Endothelial cell of umbilical vein (primary cell): ENCODE measurements at regions of chr20 and their contacts with region 1.

Region 1: GRCh38 chr20:39264506-39265172 is 302.5 kb downstream of the DHX35 start:
- DNase-seq: peak; percentile 72
- H3K4me3 ChIP-seq: no peak overlapping the region
- H3K27ac ChIP-seq: no peak overlapping the region
- H3K4me1 ChIP-seq: peaks cover 4% of the 10 kb centered on the region
- H3K27me3 ChIP-seq: no peaks in the 10 kb centered on the region
- CTCF ChIP-seq: peak; percentile 87 to 93
- POLR2A ChIP-seq: no peak

Region 2: GRCh38 chr20:39112178-39112743 is 152.4 kb before region 1 on chr20:
- CTCF ChIA-PET with region 1: interaction called, 11 read pairs
- POLR2A ChIA-PET with region 1: no interaction called
- dilution Hi-C with region 1: no loop called
- intact Hi-C with region 1: loop called (anchors 1 kb)
- DNase-seq: peak; percentile 41
- H3K4me3 ChIP-seq: no peak overlapping the region
- H3K27ac ChIP-seq: no peak overlapping the region
- H3K4me1 ChIP-seq: peaks cover 22% of the 10 kb centered on the region
- H3K27me3 ChIP-seq: peaks cover 2 to 20% of the 10 kb centered on the region in 2 experiments
- CTCF ChIP-seq: peak; percentile 49 to 62
- POLR2A ChIP-seq: no peak

Region 3: DNA sequence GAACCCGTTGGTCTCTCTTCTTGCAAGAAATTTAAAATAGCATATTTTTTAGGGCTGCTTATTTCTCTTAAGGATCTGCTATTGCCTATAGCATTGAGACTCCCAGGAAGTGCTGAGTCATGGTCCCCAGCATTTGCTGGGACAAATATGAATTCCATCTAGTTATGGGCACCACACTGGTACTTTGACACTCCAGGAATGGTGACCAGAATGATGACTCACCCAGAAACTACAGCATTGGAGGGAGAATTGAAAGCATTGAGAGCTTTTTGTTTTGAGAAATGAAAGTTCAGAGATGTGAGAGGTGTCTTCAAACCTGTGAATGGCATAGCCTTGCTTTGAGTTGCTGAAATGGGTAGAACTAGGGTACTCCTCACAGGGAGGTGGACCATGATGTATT is 397.2 kb after region 1 on chr20:
- CTCF ChIA-PET with region 1: no interaction called
- POLR2A ChIA-PET with region 1: no interaction called
- dilution Hi-C with region 1: no loop called
- intact Hi-C with region 1: loop called (anchors 10 kb)
- DNase-seq: peak; percentile 7
- H3K4me3 ChIP-seq: no peak overlapping the region
- H3K27ac ChIP-seq: no peak overlapping the region
- H3K4me1 ChIP-seq: peaks cover 28% of the 10 kb centered on the region
- H3K27me3 ChIP-seq: no peaks in the 10 kb centered on the region
- CTCF ChIP-seq: no peak
- POLR2A ChIP-seq: no peak

Region 4: GRCh38 chr20:40160097-40160550 is 895.5 kb after region 1 on chr20:
- CTCF ChIA-PET with region 1: interaction called, 11 read pairs
- POLR2A ChIA-PET with region 1: no interaction called
- dilution Hi-C with region 1: no loop called
- intact Hi-C with region 1: no loop called
- DNase-seq: peak; percentile 75
- H3K4me3 ChIP-seq: no peak overlapping the region
- H3K27ac ChIP-seq: no peak overlapping the region
- H3K4me1 ChIP-seq: no peaks in the 10 kb centered on the region
- H3K27me3 ChIP-seq: no peaks in the 10 kb centered on the region
- CTCF ChIP-seq: peak; percentile 83 to 89
- POLR2A ChIP-seq: no peak

Region 5: GRCh38 chr20:40471261-40471629 is 1206.6 kb after region 1 on chr20:
- CTCF ChIA-PET with region 1: no interaction called
- POLR2A ChIA-PET with region 1: no interaction called
- dilution Hi-C with region 1: no loop called
- intact Hi-C with region 1: loop called (anchors 10 kb)
- DNase-seq: no peak
- H3K4me3 ChIP-seq: no peak overlapping the region
- H3K27ac ChIP-seq: no peak overlapping the region
- H3K4me1 ChIP-seq: no peaks in the 10 kb centered on the region
- H3K27me3 ChIP-seq: no peaks in the 10 kb centered on the region
- CTCF ChIP-seq: peak in 1 of 2 donors; percentile 14
- POLR2A ChIP-seq: no peak

Region 6: DNA sequence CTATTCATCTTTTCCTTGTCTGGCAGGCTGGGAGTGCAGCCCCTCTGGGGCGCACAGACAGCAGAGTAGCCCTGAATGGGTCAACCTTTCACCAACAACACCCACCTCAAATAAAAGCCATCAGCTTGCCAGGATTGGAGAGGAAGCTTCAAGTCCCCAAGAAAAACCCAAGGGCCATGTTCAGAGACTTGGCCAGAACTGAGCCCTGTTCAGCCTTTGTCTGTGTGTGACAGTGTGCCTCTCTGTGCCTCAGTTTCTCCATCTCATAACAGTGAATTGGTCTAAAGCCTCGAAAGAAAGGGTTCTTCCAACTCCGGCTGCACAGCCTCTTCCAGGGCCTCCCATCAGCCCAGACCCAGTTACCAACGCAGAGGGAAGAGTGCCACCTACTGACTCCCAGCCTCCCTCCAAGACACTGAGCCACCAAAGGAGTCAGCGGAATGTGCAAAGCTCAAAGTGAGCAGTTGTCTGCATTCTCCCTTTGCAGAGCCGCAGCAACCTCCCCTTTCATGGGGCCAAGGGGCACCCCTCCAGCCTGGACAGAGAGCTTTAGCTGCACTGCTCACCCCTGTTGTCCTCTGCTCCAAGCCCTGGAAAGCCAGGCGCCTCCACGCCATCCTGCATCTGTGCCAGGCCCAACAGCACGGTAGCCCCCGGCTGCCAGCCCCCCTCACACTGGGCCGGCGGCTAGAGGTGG is 1681.3 kb after region 1 on chr20:
- CTCF ChIA-PET with region 1: interaction called, 12 read pairs
- POLR2A ChIA-PET with region 1: no interaction called
- dilution Hi-C with region 1: no loop called
- intact Hi-C with region 1: no loop called
- DNase-seq: peak; percentile 56
- H3K4me3 ChIP-seq: no peak overlapping the region
- H3K27ac ChIP-seq: no peak overlapping the region
- H3K4me1 ChIP-seq: no peaks in the 10 kb centered on the region
- H3K27me3 ChIP-seq: no peaks in the 10 kb centered on the region
- CTCF ChIP-seq: peak; percentile 55 to 78
- POLR2A ChIP-seq: no peak